Left cardiac atrium (tissue), 4 donors: ENCODE measurements at regions of chr3 and their contacts with region 1.

Region 1: GRCh38 chr3:170811928-170812591 is 57.9 kb downstream of the RPL22L1 start:
- DNase-seq: peak; percentile 39
- ATAC-seq: peak; percentile 82 to 88

Region 2: GRCh38 chr3:170307671-170308403 is 504.2 kb before region 1 on chr3:
- intact Hi-C with region 1: loop called in 1 of 2 experiments (anchors 5 kb)
- DNase-seq: no peak
- ATAC-seq: no peak

Region 3: DNA sequence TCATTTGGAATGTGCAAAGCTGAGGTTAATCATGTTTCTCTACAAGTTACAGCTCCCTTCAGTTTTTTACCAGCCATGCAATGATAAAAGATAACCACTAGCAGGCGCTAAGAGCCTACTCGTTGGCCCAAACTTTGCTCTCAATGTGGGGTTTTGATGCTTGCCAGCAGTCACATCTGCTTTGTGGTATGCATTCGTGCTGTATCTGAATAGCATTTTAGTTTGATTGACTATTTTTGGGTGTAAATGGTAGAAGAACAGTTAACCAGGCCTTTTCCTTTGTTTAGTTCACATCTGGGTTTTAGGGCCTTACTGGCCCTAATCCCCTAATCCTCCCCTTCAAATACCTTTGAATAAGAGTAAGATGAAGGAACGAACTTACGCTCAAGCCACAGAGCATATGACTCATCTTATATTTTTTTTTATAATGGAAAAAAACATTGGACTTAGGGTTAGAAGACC is 397.8 kb before region 1 on chr3:
- intact Hi-C with region 1: loop called (anchors 5 kb)
- DNase-seq: no peak
- ATAC-seq: peak; percentile 39 to 47

Region 4: GRCh38 chr3:170553788-170554757 is 258.0 kb before region 1 on chr3:
- intact Hi-C with region 1: loop called in 1 of 2 experiments (anchors 5 kb)
- DNase-seq: no peak
- ATAC-seq: no peak

Region 5: DNA sequence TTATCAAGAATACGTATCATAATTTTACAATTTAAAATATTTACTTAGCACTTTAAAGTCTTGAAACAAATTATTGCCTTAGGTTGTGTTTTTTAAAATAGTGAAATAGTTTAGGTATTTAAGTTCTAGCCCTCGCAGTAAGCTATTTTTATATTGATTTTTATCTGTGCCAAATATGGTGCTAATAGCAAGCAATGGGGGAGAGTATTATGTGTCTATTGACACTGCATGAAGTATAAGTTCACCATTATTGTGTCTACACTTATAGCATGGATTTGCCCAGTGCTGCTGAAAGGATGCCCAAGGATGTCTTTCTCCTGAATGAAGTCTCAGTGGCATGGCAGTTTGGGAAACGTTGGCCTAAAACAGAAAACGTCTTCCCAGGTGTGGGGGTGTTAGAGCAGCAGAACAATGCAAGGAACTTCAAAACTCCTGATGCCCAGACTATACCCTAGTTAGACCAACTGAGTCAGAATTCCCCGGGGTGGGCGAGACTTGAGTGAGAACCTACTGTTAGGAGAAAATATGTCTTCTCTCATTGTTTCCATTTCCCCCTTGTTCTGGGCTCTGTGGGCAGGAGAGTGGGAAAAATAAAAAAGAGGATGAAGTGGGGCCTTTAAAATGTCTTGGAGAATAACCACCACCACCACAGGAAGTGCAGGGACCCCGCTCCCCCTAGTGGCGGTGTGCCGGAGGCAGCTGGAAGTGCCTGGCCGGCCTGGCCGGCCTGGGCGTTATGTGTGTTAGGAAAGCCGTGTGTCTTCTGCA is 122.0 kb before region 1 on chr3:
- intact Hi-C with region 1: loop called in 1 of 2 experiments (anchors 10 kb)
- DNase-seq: peak; percentile 68
- ATAC-seq: peak in 1 of 2 donors; percentile 71

Region 6: DNA sequence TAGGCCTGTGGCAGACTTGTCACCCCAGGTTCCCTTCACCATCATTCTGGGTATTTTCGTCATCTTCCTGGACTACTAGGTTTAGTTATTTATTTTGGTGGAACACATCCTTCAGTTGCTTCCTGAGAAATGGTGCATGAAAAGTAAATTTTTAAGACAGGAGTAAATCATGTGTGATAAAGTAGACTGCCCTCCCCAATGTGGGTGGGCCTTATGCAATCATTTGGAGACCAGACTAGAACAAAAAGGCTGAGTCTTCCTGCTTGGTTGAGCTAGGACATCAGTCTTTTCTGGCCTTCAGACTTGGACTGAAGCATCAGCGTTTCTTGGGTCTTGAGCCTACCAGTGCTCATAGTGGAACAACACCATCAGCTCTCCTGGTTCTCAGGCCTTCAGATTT is 265.2 kb after region 1 on chr3:
- intact Hi-C with region 1: no loop called
- DNase-seq: no peak
- ATAC-seq: no peak

Region 7: GRCh38 chr3:171162986-171163723 is 351.1 kb after region 1 on chr3:
- intact Hi-C with region 1: no loop called
- DNase-seq: no peak
- ATAC-seq: no peak

Region 8: GRCh38 chr3:171269542-171269941 is 457.5 kb after region 1 on chr3:
- intact Hi-C with region 1: no loop called
- DNase-seq: no peak
- ATAC-seq: no peak